ENCODE measurements at regions of chr9 and their contacts with region 1.

Region 1: GRCh38 chr9:129458663-129459555 is 162.0 kb downstream of the C9orf50 start:
- DNase-seq: peak; percentile 65
- ATAC-seq: peak; percentile 18
- H3K4me3 Mint-ChIP-seq: peak overlapping the region; percentile 10
- H3K27ac Mint-ChIP-seq: peak overlapping the region; percentile 80
- H3K4me1 Mint-ChIP-seq: peaks cover 38% of the 10 kb centered on the region
- H3K27me3 Mint-ChIP-seq: no peaks in the 10 kb centered on the region
- CTCF ChIP-seq: no peak

Region 2: GRCh38 chr9:129436751-129437625 is 21.9 kb before region 1 on chr9:
- CTCF ChIA-PET with region 1: no interaction called
- POLR2A ChIA-PET with region 1: interaction called, 11 read pairs
- intact Hi-C with region 1: no loop called
- DNase-seq: peak; percentile 45
- ATAC-seq: peak; percentile 67
- H3K4me3 Mint-ChIP-seq: peak overlapping the region; percentile 68
- H3K27ac Mint-ChIP-seq: no peak overlapping the region
- H3K4me1 Mint-ChIP-seq: peaks cover 21% of the 10 kb centered on the region
- H3K27me3 Mint-ChIP-seq: peaks cover 35% of the 10 kb centered on the region
- CTCF ChIP-seq: no peak

Measured in activated CD8-positive, alpha-beta T cell treated with anti-CD3 and anti-CD28 coated beads for 36 hours (primary cell).